ENCODE measurements at regions of chr14 and their contacts with region 1.

Region 1: GRCh38 chr14:32509632-32510187 is 180.6 kb downstream of the AKAP6 start:
- DNase-seq: peak; percentile 80
- ATAC-seq: peak; percentile 69
- H3K4me3 ChIP-seq: peak overlapping the region; percentile 43
- H3K27ac ChIP-seq: peak overlapping the region; percentile 40
- H3K4me1 ChIP-seq: peaks cover 52% of the 10 kb centered on the region
- H3K27me3 ChIP-seq: no peaks in the 10 kb centered on the region
- CTCF ChIP-seq: no peak

Region 2: GRCh38 chr14:31858868-31859267 is 650.8 kb before region 1 on chr14:
- CTCF ChIA-PET with region 1: interaction called, 16 read pairs
- POLR2A ChIA-PET with region 1: no interaction called
- intact Hi-C with region 1: no loop called
- DNase-seq: peak; percentile 53
- ATAC-seq: peak; percentile 99
- H3K4me3 ChIP-seq: no peak overlapping the region
- H3K27ac ChIP-seq: no peak overlapping the region
- H3K4me1 ChIP-seq: peaks cover 10% of the 10 kb centered on the region
- H3K27me3 ChIP-seq: no peaks in the 10 kb centered on the region
- CTCF ChIP-seq: no peak

Region 3: DNA sequence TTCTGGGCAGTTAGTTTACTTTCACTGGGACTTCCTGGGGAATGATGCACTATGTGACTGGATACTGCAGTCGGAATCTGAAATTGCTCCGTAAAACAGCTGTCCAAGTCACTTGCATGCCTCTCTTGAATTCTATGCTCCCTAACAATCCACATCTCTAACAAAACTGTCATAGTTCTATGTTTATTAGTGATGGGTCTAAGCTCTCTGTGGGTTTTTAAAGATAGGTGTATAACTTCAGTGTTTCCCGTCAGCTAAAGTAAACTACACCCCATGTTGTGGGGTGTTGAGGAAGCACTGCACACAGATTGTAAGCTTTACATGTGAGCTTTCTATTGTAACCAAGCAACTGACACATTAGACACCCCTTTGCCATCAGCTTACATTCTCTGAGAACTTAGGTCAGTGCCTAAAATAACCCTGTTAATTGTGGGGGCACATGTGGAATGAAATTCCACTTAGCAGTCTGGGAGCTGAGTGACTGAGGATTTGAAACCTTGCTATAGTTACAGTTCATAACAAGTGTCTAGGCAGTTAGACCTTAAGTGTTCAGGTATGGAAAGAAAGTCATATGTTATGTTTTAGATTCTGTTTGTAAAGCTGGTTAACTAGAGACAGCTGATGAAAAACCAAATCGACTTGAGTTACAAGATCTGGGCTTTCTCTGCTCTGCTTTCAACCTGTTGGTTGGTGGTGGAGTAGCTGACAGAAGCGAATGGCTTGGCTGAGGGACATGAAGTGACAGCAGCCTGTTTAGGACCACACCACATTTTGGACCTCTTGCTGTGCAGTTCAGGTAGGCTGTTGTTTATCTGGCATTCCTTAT is 14.9 kb before region 1 on chr14:
- CTCF ChIA-PET with region 1: no interaction called
- POLR2A ChIA-PET with region 1: interaction called, 14 read pairs
- intact Hi-C with region 1: no loop called
- DNase-seq: no peak
- ATAC-seq: peak; percentile 57
- H3K4me3 ChIP-seq: no peak overlapping the region
- H3K27ac ChIP-seq: no peak overlapping the region
- H3K4me1 ChIP-seq: no peaks in the 10 kb centered on the region
- H3K27me3 ChIP-seq: no peaks in the 10 kb centered on the region
- CTCF ChIP-seq: no peak

Region 4: GRCh38 chr14:32560209-32560857 is 50.6 kb after region 1 on chr14:
- CTCF ChIA-PET with region 1: interaction called, 15 read pairs
- POLR2A ChIA-PET with region 1: no interaction called
- intact Hi-C with region 1: loop called (anchors 1 kb)
- DNase-seq: peak; percentile 84
- ATAC-seq: peak; percentile 61
- H3K4me3 ChIP-seq: no peak overlapping the region
- H3K27ac ChIP-seq: no peak overlapping the region
- H3K4me1 ChIP-seq: peaks cover 30% of the 10 kb centered on the region
- H3K27me3 ChIP-seq: no peaks in the 10 kb centered on the region
- CTCF ChIP-seq: peak; percentile 97